Activated naive CD4-positive, alpha-beta T cell treated with anti-CD3 and anti-CD28 coated beads for 36 hours (primary cell): ENCODE measurements at regions of chrX and their contacts with region 1.

Region 1: GRCh38 chrX:41180194-41180908 is 95.1 kb downstream of the USP9X start:
- DNase-seq: peak; percentile 67
- H3K4me3 Mint-ChIP-seq: peak overlapping the region; percentile 41
- H3K27ac Mint-ChIP-seq: peak overlapping the region; percentile 90
- H3K4me1 Mint-ChIP-seq: peaks cover 45% of the 10 kb centered on the region
- H3K27me3 Mint-ChIP-seq: no peaks in the 10 kb centered on the region

Region 2: GRCh38 chrX:40108959-40109287 is 1071.4 kb before region 1 on chrX:
- CTCF ChIA-PET with region 1: no interaction called
- intact Hi-C with region 1: no loop called
- DNase-seq: peak; percentile 71
- H3K4me3 Mint-ChIP-seq: peak overlapping the region; percentile 50
- H3K27ac Mint-ChIP-seq: no peak overlapping the region
- H3K4me1 Mint-ChIP-seq: peaks cover 8% of the 10 kb centered on the region
- H3K27me3 Mint-ChIP-seq: peaks cover 2% of the 10 kb centered on the region

Region 3: GRCh38 chrX:40871385-40872082 is 308.8 kb before region 1 on chrX:
- CTCF ChIA-PET with region 1: no interaction called
- intact Hi-C with region 1: loop called (anchors 1 kb)
- DNase-seq: peak; percentile 72
- H3K4me3 Mint-ChIP-seq: no peak overlapping the region
- H3K27ac Mint-ChIP-seq: peak overlapping the region; percentile 88
- H3K4me1 Mint-ChIP-seq: peaks cover 12% of the 10 kb centered on the region
- H3K27me3 Mint-ChIP-seq: no peaks in the 10 kb centered on the region

Region 4: DNA sequence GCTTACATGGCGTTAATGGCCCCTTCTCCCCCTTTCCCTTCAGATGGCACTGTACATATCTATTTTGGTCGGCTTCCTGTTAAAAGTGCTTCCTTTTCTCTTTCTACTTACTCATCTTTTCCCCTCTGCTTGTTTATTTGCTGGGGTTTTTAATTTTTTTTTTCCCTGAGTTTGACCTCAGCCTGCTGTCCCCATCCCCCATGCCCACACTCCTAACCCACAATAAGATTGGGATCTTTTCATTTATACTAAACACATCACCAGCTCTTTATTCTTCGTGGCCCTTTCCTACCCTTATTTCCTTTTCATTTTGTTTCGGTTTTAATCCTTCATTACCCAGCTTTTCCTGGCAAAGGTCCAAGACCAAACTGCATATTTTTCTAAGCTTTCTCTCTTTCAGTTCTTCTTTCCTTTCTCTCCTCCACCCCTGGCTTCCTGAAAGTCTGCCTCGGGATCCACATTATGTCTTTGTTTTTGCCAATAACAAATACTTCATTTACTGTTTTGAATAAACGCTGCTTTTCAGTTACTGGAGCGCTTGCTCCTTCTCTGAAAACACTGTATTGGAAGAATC is 247.1 kb before region 1 on chrX:
- CTCF ChIA-PET with region 1: no interaction called
- intact Hi-C with region 1: no loop called
- DNase-seq: peak; percentile 26
- H3K4me3 Mint-ChIP-seq: peak overlapping the region; percentile 48
- H3K27ac Mint-ChIP-seq: peak overlapping the region; percentile 87
- H3K4me1 Mint-ChIP-seq: peaks cover 22% of the 10 kb centered on the region
- H3K27me3 Mint-ChIP-seq: no peaks in the 10 kb centered on the region

Region 5: GRCh38 chrX:41153957-41154356 is 26.4 kb before region 1 on chrX:
- CTCF ChIA-PET with region 1: no interaction called
- intact Hi-C with region 1: no loop called
- DNase-seq: no peak
- H3K4me3 Mint-ChIP-seq: no peak overlapping the region
- H3K27ac Mint-ChIP-seq: no peak overlapping the region
- H3K4me1 Mint-ChIP-seq: peaks cover 5% of the 10 kb centered on the region
- H3K27me3 Mint-ChIP-seq: no peaks in the 10 kb centered on the region

Region 6: DNA sequence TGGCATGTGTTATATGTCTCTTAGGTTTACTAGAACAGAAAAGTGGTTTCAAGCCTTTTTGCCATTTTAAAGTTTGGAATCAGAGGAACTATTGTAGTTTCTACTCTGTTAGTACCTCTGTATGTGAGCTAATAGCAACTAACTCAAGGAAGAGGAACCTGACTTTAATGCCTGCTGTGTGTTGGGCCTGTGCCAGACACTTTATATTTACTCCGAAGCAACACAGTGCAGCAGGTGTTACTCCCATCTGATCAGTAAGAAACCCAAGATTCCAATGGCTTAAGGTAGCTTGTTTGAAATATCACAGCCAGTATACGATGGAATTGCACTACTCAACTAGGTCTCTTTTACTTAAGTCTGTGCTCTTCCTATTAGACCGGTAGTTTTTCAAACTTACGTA is 15.9 kb before region 1 on chrX:
- CTCF ChIA-PET with region 1: interaction called, 10 read pairs
- intact Hi-C with region 1: no loop called
- DNase-seq: no peak
- H3K4me3 Mint-ChIP-seq: no peak overlapping the region
- H3K27ac Mint-ChIP-seq: no peak overlapping the region
- H3K4me1 Mint-ChIP-seq: peaks cover 4% of the 10 kb centered on the region
- H3K27me3 Mint-ChIP-seq: no peaks in the 10 kb centered on the region

Region 7: GRCh38 chrX:41259516-41259915 is 79.2 kb after region 1 on chrX:
- CTCF ChIA-PET with region 1: interaction called, 18 read pairs
- intact Hi-C with region 1: no loop called
- DNase-seq: no peak
- H3K4me3 Mint-ChIP-seq: no peak overlapping the region
- H3K27ac Mint-ChIP-seq: no peak overlapping the region
- H3K4me1 Mint-ChIP-seq: no peaks in the 10 kb centered on the region
- H3K27me3 Mint-ChIP-seq: no peaks in the 10 kb centered on the region

Region 8: GRCh38 chrX:41705680-41706374 is 525.5 kb after region 1 on chrX:
- CTCF ChIA-PET with region 1: no interaction called
- intact Hi-C with region 1: no loop called
- DNase-seq: no peak
- H3K4me3 Mint-ChIP-seq: no peak overlapping the region
- H3K27ac Mint-ChIP-seq: no peak overlapping the region
- H3K4me1 Mint-ChIP-seq: peaks cover 32% of the 10 kb centered on the region
- H3K27me3 Mint-ChIP-seq: no peaks in the 10 kb centered on the region